Activated CD4-positive, alpha-beta T cell treated with anti-CD3 and anti-CD28 coated beads for 36 hours (primary cell): ENCODE measurements at regions of chr9 and their contacts with region 1.

Region 1: GRCh38 chr9:15813076-15813475 is 260.2 kb downstream of the CCDC171 start:
- DNase-seq: no peak
- ATAC-seq: no peak
- H3K4me3 Mint-ChIP-seq: no peak overlapping the region
- H3K27ac Mint-ChIP-seq: no peak overlapping the region
- H3K4me1 Mint-ChIP-seq: no peaks in the 10 kb centered on the region
- H3K27me3 Mint-ChIP-seq: no peaks in the 10 kb centered on the region

Region 2: DNA sequence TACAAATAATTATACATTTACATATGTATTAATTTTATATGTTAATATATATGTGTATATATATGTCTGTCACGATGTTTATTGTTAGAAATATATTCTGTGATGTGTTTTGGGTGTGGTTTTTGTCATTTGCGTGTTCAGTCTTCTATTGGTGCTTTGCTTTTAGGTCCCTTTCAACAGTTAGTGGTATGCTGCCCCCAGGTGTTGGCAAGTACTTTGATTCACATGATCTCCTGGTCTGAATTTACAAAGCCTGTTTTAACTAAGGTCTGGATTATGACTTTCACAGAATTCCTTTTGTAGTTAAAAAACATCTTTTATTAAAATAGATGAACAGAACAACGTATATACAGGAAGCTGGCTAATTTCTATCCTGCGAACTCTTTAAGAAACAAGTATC is 11.2 kb after region 1 on chr9:
- CTCF ChIA-PET with region 1: no interaction called
- POLR2A ChIA-PET with region 1: no interaction called
- intact Hi-C with region 1: loop called in 1 of 2 experiments (anchors 1 kb)
- DNase-seq: no peak
- ATAC-seq: no peak
- H3K4me3 Mint-ChIP-seq: no peak overlapping the region
- H3K27ac Mint-ChIP-seq: no peak overlapping the region
- H3K4me1 Mint-ChIP-seq: no peaks in the 10 kb centered on the region
- H3K27me3 Mint-ChIP-seq: no peaks in the 10 kb centered on the region